Activated CD4-positive, alpha-beta memory T cell treated with anti-CD3 and anti-CD28 coated beads, Interleukin-2, amount 10 ng/mL, durations not matched to agents 7 days and 5 days (primary cell): ENCODE measurements at regions of chr3 and their contacts with region 1.

Region 1: DNA sequence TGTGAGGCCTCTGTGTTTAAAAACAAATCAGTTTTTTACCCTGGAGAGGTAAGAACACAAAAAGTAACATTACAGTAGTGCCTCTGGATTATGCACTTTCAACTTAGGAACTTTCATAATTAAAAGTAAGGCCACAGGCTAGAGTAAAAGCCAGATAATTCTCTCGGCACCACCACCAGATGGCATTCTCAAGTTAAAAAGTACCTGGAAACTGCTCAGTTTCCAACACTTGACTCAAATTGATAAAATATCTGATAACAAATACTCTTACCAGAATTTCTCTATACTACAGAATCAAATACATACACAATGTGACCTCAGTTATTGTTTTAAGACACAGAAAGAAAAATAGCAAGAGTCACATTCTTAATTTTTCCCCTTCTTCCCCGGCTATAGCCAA is 19.9 kb downstream of the SPICE1 start:
- DNase-seq: peak; percentile 47
- H3K4me3 Mint-ChIP-seq: no peak overlapping the region
- H3K27ac Mint-ChIP-seq: no peak overlapping the region
- H3K4me1 Mint-ChIP-seq: peaks cover 8% of the 10 kb centered on the region
- H3K27me3 Mint-ChIP-seq: no peaks in the 10 kb centered on the region

Region 2: GRCh38 chr3:113507501-113508067 is 12.5 kb after region 1 on chr3:
- CTCF ChIA-PET with region 1: interaction called, 11 read pairs
- POLR2A ChIA-PET with region 1: no interaction called
- DNase-seq: no peak
- H3K4me3 Mint-ChIP-seq: no peak overlapping the region
- H3K27ac Mint-ChIP-seq: no peak overlapping the region
- H3K4me1 Mint-ChIP-seq: no peaks in the 10 kb centered on the region
- H3K27me3 Mint-ChIP-seq: no peaks in the 10 kb centered on the region